Tibial artery (tissue), 4 donors: ENCODE measurements at regions of chr11 and their contacts with region 1.

Region 1: GRCh38 chr11:1893581-1894359 is 2.1 kb upstream of the PRR33 start:
- DNase-seq: no peak
- H3K4me3 ChIP-seq: no peak overlapping the region
- H3K27ac ChIP-seq: no peak overlapping the region
- H3K4me1 ChIP-seq: peaks cover 0 to 5% (median 0%) of the 10 kb centered on the region in 4 donors
- H3K27me3 ChIP-seq: peaks cover 0 to 18% of the 10 kb centered on the region in 2 donors
- CTCF ChIP-seq: no peak

Region 2: DNA sequence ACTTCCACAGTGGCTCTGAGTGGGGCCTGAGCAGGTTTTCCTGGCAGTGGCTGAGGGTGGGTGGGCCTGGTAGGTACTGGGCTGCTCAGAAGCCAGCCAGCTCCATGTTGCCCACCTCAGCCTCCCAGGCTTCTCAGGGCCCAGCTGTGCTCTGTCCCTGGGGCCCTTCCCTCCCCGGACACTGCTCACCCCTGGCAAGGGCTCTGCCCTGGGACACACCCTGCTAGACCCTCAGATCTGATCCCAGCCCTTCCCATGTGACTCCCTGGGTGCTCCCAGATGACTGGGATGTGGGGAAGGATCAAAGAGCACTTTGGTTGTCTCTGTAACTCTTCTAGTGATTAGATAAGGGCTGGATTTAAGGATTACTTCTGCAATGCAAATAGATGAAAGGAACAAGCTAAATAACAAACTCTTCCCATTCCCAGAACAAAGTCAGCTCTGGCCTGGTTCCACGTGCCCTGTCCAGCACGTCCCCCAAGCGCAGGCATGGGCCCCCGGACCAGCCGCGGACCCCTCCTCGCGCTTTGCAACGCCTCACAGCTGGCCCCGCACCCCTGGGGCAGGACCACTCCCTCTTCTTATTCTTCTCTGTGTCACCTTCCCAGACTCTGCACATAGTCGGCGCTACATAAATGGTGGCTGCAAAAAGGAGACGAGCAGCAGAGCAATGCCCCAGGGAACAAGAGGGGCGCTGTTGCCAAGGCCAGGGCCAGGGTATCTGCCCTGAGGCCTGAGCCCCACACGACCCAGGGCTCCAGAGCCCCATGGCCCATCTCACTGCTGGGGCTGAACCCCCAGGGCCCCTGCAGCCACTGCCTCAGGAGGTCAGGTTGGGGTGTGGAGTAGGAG is 202.5 kb before region 1 on chr11:
- intact Hi-C with region 1: no loop called
- DNase-seq: peak in 1 of 2 donors; percentile 57
- H3K4me3 ChIP-seq: no peak overlapping the region
- H3K27ac ChIP-seq: no peak overlapping the region
- H3K4me1 ChIP-seq: peaks cover 0 to 19% (median 10%) of the 10 kb centered on the region in 4 donors
- H3K27me3 ChIP-seq: peaks cover 0 to 10% of the 10 kb centered on the region in 2 donors
- CTCF ChIP-seq: no peak

Region 3: DNA sequence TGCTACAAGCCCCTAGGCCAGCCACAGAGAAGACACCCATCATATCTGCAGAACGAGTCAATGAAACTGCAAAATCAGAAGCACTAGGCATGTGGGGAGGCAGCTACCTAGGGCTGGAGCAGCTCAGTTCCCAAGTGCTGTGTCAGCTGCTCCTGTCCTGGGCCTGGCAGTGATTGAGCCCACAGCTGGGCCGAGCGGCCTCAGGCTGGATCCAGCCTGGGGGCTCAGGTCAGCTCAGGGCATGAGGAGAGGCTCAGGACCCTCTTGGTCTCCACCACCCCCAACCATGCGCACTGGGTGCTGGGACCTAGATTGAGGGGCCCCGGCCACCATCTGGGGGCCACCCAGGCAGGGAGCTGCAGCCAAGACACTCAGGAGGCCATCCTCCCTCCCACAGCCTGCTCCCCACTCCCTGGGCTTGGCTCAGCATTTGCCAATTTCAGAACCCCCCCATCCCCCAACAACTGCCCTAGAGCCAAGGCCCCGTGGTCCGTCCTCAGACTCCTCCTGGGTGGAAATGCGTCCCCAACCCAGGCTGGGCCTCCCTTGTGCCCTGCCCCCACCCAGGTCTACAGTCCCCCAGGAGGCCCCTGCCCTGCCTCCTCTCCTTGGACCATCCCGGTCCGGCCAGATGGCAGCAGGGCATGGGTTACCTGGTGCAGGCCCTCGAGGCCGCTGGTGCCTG is 23.4 kb after region 1 on chr11:
- intact Hi-C with region 1: loop called (anchors 1 kb)
- DNase-seq: no peak
- H3K4me3 ChIP-seq: no peak overlapping the region
- H3K27ac ChIP-seq: no peak overlapping the region
- H3K4me1 ChIP-seq: peaks cover 0 to 20% (median 6%) of the 10 kb centered on the region in 4 donors
- H3K27me3 ChIP-seq: peaks cover 0 to 30% of the 10 kb centered on the region in 2 donors
- CTCF ChIP-seq: no peak

Region 4: GRCh38 chr11:2687782-2688191 is 794.0 kb after region 1 on chr11:
- intact Hi-C with region 1: no loop called
- DNase-seq: peak; percentile 10 to 62
- H3K4me3 ChIP-seq: no peak overlapping the region
- H3K27ac ChIP-seq: no peak overlapping the region
- H3K4me1 ChIP-seq: peaks cover 0 to 3% (median under 1%) of the 10 kb centered on the region in 4 donors
- H3K27me3 ChIP-seq: no peaks in the 10 kb centered on the region
- CTCF ChIP-seq: no peak